Sigmoid colon (tissue), 7 donors: ENCODE measurements at regions of chr2 and their contacts with region 1.

Region 1: DNA sequence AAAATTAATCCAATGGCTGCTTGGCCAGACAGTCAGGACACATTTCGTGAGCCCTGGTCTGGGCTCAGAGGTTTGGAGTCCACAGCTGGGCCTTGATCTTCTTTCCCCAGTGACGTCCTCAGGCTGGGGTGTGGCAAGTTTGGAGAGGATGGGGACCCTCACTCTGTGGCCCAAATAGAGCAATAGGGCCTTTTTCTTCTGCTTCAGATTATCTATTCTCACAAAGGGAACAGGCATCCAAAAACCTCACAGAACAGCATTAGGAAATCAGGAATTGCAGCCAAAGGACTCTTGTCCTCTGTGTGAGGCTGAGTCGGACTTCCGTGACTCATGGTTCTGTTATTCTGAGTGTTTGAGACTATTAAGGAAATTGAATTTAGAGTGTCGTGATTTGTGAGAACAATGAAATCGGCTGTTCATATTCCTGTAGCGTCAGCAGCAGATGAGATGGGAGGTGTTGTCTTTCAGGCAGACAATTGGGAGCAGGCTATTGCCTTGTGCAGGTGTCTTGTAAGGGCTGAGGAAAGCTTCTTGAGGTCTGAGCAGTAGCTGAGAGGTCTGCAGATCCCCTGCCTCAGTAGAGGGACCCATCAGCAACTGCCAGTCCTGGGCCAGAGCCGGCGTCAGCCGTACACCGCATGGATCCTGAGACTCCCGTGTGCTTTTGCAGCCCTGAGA is 113.8 kb downstream of the SH3RF3 start:
- DNase-seq: peak; percentile 87
- H3K4me3 ChIP-seq: no peak overlapping the region
- H3K27ac ChIP-seq: peak overlapping the region; percentile 72 to 91 (median 86)
- H3K4me1 ChIP-seq: peaks cover 0 to 72% (median 63%) of the 10 kb centered on the region in 4 donors
- H3K27me3 ChIP-seq: no peaks in the 10 kb centered on the region
- CTCF ChIP-seq: no peak
- EP300 ChIP-seq: no peak
- POLR2A ChIP-seq: no peak

Region 2: GRCh38 chr2:109128048-109128465 is 114.7 kb before region 1 on chr2:
- intact Hi-C with region 1: loop called (anchors 2 kb)
- DNase-seq: peak; percentile 92
- H3K4me3 ChIP-seq: peak overlapping the region; percentile 42 to 86 (median 74)
- H3K27ac ChIP-seq: peak overlapping the region; percentile 74 to 87 (median 84)
- H3K4me1 ChIP-seq: peaks cover 0 to 28% (median 21%) of the 10 kb centered on the region in 4 donors
- H3K27me3 ChIP-seq: no peaks in the 10 kb centered on the region
- CTCF ChIP-seq: peak; percentile 87 to 91 (median 88)
- EP300 ChIP-seq: no peak
- POLR2A ChIP-seq: peak in 1 of 2 donors; percentile 15

Region 3: DNA sequence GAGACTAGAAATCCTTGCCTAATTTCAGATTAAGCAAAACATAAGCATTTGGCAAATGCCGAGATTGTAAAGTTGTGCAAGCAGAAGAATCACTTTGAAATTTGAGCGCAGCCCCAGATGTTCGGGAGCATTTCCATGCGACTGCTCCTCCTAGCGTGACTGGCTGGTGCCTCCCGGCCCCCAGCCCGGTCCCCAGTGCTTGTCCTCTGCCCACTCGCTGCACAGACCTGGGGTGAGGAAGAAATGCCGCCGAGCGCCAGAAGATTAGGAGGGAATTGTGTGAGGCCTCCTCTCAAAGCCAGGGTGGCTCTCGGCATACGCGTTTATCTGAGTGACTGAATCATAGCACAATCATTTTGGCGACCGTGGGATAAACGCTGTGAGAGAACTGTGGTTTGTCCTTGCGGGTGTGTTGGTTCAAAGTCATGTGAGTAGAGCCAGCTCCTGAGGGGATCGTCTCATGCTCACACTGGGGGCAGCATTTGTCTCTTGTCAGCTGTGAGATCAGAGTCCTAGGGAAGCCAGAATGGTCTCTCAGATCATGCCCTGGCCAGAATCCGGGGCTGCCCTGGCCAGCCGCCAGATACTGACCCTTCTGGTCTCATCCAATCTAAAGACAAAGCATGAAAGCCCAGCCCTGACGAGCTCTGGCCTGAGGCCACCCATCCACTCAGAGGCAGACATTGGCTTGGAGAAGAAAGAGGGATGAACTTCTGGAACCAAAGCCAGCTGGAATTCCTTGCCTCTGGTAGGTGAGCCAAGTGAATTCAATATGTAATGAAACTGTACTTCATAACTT is 75.6 kb after region 1 on chr2:
- intact Hi-C with region 1: loop called (anchors 2 kb)
- DNase-seq: peak; percentile 95
- H3K4me3 ChIP-seq: peak overlapping the region in 2 of 4 donors; percentile 3 to 21
- H3K27ac ChIP-seq: peak overlapping the region; percentile 76 to 82 (median 82)
- H3K4me1 ChIP-seq: peaks cover 0 to 58% (median 52%) of the 10 kb centered on the region in 4 donors
- H3K27me3 ChIP-seq: no peaks in the 10 kb centered on the region
- CTCF ChIP-seq: no peak
- EP300 ChIP-seq: peak in 1 of 4 donors; percentile 14
- POLR2A ChIP-seq: no peak

Region 4: DNA sequence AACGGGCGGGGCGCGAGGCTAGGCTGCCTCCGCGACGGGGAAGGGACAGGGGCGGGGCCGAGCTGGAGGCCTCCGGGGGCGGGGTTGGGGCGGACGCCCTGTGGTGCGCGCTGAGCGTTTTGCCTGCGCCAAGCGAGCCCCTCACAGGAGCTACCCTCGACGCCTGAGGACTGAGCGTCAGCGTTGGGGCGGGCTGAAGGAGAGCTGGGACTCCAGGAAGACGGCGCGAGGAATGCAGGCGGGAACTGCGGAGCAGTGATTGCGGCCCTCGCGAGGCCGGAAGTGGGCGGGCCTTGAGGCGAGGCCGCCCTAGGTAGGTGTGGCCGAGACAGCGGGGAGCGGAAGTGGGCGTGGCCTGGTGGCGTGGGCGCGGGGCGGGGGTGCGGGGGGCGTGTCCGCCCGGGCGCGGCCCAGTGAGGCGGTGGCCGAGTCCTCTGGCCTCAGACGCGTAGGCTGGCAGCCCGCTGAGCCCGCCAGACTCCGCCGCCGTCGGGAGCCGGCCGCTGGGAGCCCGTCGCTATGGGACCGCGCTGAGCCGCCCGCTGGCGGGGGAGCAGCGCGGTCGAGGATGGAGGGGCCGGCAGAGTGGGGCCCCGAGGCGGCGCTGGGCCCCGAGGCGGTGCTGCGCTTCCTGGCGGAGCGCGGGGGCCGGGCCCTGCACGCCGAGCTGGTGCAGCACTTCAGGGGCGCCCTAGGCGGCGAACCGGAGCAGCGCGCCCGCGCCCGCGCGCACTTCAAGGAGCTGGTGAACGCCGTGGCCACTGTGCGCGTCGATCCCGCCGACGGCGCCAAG is 371.3 kb after region 1 on chr2 and contains the starts of genes SEPTIN10 and SOWAHC:
- intact Hi-C with region 1: loop called (anchors 5 kb)
- DNase-seq: peak; percentile 99
- H3K4me3 ChIP-seq: peak within 1 kb of the TSS; percentile 66 to 85 (median 70)
- H3K27ac ChIP-seq: peak within 1 kb of the TSS; percentile 93 to 100 (median 99)
- H3K4me1 ChIP-seq: peaks cover 0 to 63% (median 59%) of the 10 kb centered on the region in 4 donors
- H3K27me3 ChIP-seq: no peaks in the 10 kb centered on the region
- CTCF ChIP-seq: no peak
- EP300 ChIP-seq: peak in 1 of 4 donors; percentile 30
- POLR2A ChIP-seq: peak in 1 of 2 donors; percentile 59
- total RNA-seq, gene SEPTIN10: 122 to 178 (median 161) TPM
- total RNA-seq, gene SOWAHC: 19.4 to 29.3 (median 23.6) TPM

Region 5: GRCh38 chr2:109690822-109691547 is 448.2 kb after region 1 on chr2:
- intact Hi-C with region 1: no loop called
- DNase-seq: peak; percentile 88
- H3K4me3 ChIP-seq: peak overlapping the region in 1 of 4 donors; percentile 2
- H3K27ac ChIP-seq: peak overlapping the region; percentile 82 to 92 (median 90)
- H3K4me1 ChIP-seq: peaks cover 0 to 95% (median 85%) of the 10 kb centered on the region in 4 donors
- H3K27me3 ChIP-seq: no peaks in the 10 kb centered on the region
- CTCF ChIP-seq: no peak
- EP300 ChIP-seq: peak; percentile 7 to 88 (median 63)
- POLR2A ChIP-seq: peak in 1 of 2 donors; percentile 15